ENCODE measurements at regions of chr17 and their contacts with region 1.

Region 1: GRCh38 chr17:81484195-81484979 is 28.2 kb downstream of the ACTG1 start:
- DNase-seq: peak; percentile 89
- H3K4me3 Mint-ChIP-seq: peak overlapping the region; percentile 21
- H3K27ac Mint-ChIP-seq: no peak overlapping the region
- H3K4me1 Mint-ChIP-seq: peaks cover 13% of the 10 kb centered on the region
- H3K27me3 Mint-ChIP-seq: peaks cover 34% of the 10 kb centered on the region

Region 2: DNA sequence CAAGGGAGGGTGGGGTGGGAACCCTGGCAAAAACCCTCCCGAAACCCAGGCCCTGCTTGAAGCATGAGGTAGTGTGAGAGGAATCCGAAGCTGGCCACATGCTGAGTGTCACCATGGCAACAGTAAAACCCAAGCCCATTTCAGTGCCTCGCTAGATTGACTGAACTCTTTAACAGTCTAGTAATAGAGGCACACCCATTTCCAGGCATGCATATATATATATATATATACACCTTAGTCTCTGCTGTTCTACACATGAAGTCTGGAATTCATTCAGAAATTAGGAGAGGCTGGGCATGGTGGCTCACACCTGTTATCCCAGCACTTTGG is 552.5 kb before region 1 on chr17:
- CTCF ChIA-PET with region 1: no interaction called
- POLR2A ChIA-PET with region 1: no interaction called
- DNase-seq: no peak
- H3K4me3 Mint-ChIP-seq: no peak overlapping the region
- H3K27ac Mint-ChIP-seq: no peak overlapping the region
- H3K4me1 Mint-ChIP-seq: peaks cover 17% of the 10 kb centered on the region
- H3K27me3 Mint-ChIP-seq: no peaks in the 10 kb centered on the region

Region 3: DNA sequence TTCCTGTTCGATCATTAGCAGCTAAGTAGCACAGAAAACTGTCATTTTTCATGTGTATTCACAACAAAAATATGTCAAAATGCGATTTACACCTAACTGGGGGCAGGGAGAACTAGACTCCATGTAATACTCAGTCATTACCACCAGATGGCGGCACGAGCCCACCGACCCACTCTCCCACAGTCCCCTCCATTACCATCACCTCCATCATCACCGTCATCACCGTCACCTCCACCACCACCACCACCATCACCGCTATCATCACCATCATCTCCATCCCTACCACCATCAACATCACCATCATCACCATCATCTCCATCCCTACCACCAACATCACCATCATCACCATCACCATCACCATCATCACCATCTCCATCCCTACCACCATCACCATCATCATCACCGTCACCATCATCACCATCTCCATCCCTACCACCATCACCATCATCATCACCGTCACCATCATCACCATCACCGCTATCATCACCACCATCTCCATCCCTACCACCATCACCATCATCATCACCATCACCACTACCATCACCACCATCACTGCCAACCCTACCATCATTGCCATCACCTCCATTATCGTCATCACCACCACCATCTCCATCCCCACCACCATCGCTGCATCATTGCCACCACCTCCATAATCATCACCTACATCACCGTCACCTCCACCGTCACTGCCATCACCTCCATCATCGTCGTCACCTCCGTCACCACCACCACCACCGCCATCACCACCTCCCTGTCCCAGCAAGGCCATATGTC is 230.8 kb before region 1 on chr17:
- CTCF ChIA-PET with region 1: interaction called, 13 read pairs
- POLR2A ChIA-PET with region 1: no interaction called
- DNase-seq: peak; percentile 57
- H3K4me3 Mint-ChIP-seq: peak overlapping the region; percentile 0
- H3K27ac Mint-ChIP-seq: peak overlapping the region; percentile 33
- H3K4me1 Mint-ChIP-seq: peaks cover 8% of the 10 kb centered on the region
- H3K27me3 Mint-ChIP-seq: no peaks in the 10 kb centered on the region

Region 4: GRCh38 chr17:81512560-81513371 is 28.4 kb after region 1 on chr17 and contains the start of gene ACTG1:
- CTCF ChIA-PET with region 1: no interaction called
- POLR2A ChIA-PET with region 1: interaction called, 14 read pairs
- DNase-seq: peak; percentile 92
- H3K4me3 Mint-ChIP-seq: peak within 1 kb of the TSS; percentile 93
- H3K27ac Mint-ChIP-seq: peak within 1 kb of the TSS; percentile 90
- H3K4me1 Mint-ChIP-seq: peaks cover 39% of the 10 kb centered on the region
- H3K27me3 Mint-ChIP-seq: no peaks in the 10 kb centered on the region
- total RNA-seq, gene ACTG1: 3,658 to 3,769 TPM